ENCODE measurements at regions of chr11 and their contacts with region 1.

Region 1: GRCh38 chr11:65625628-65626342 is 10.2 kb downstream of the PCNX3 start:
- DNase-seq: peak; percentile 71 to 84
- ATAC-seq: peak; percentile 87 to 97 (median 91)
- H3K4me3 ChIP-seq: no peak overlapping the region
- H3K4me3 Mint-ChIP-seq: no peak overlapping the region
- H3K27ac ChIP-seq: no peak overlapping the region
- H3K27ac Mint-ChIP-seq: peak overlapping the region; percentile 63 to 66
- H3K4me1 ChIP-seq: peaks cover 10% of the 10 kb centered on the region
- H3K4me1 Mint-ChIP-seq: peaks cover 7 to 20% of the 10 kb centered on the region in 2 donors
- H3K27me3 ChIP-seq: no peaks in the 10 kb centered on the region
- H3K27me3 Mint-ChIP-seq: no peaks in the 10 kb centered on the region
- CTCF ChIP-seq: peak; percentile 78

Region 2: GRCh38 chr11:65637794-65638317 is 12.1 kb after region 1 on chr11 and contains the start of gene SIPA1:
- intact Hi-C with region 1: no loop called
- DNase-seq: peak; percentile 86 to 88
- ATAC-seq: peak; percentile 41 to 62 (median 49)
- H3K4me3 ChIP-seq: peak within 1 kb of the TSS; percentile 98
- H3K4me3 Mint-ChIP-seq: peak within 1 kb of the TSS; percentile 95
- H3K27ac ChIP-seq: peak within 1 kb of the TSS; percentile 98
- H3K27ac Mint-ChIP-seq: peak within 1 kb of the TSS; percentile 98 to 99
- H3K4me1 ChIP-seq: peaks cover 83% of the 10 kb centered on the region
- H3K4me1 Mint-ChIP-seq: peaks cover 52 to 64% of the 10 kb centered on the region in 2 donors
- H3K27me3 ChIP-seq: no peaks in the 10 kb centered on the region
- H3K27me3 Mint-ChIP-seq: no peaks in the 10 kb centered on the region
- CTCF ChIP-seq: peak; percentile 20
- total RNA-seq, gene SIPA1: 520 to 776 (median 743) TPM

Region 3: DNA sequence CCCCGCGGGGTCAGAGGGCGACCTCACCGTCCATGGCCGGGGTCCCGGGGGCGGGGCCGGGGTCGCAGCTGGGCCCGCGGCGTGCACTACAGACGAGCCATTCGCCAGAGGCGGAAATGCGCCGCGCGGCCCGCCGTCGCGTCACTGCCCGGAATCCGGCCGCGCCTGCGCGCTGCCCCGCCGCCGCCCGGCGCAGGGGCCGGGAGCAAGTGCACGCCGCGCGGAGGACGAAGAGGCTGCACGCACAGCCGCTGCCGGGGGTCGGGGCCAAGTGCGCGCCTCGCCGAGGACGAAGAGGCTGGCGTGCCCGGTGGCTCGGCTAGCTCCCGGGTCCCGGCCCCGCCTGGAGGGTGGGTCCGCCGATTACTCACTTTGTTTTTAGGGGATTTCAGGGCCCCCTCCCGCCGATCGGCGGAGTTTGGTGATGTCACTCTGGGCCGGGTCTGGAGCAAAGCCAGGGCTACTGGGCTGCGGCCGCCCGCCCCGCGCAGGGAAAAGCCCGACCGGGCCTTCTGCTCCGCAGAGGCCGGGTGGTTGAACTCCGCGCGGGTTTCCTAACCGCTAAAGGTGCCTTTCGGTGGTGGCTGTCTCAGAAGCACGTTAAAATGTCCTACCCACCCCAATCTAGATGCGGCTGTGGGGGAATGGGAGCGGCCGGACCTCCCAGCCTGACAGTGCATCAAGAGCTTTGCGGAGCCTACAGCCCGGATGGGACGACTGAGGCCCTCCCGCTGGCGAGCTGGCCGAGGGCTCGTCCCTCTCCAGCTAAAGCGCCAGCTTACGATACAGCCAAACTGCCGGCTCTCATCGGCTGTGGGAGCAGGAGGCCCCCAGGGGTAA is 37.2 kb after region 1 on chr11 and contains the start of gene RELA:
- intact Hi-C with region 1: loop called (anchors 5 kb)
- DNase-seq: peak; percentile 89 to 94
- ATAC-seq: peak; percentile 83 to 92 (median 84)
- H3K4me3 ChIP-seq: peak within 1 kb of the TSS; percentile 95
- H3K4me3 Mint-ChIP-seq: peak within 1 kb of the TSS; percentile 92
- H3K27ac ChIP-seq: peak within 1 kb of the TSS; percentile 98
- H3K27ac Mint-ChIP-seq: peak within 1 kb of the TSS; percentile 92 to 93
- H3K4me1 ChIP-seq: peaks cover 46% of the 10 kb centered on the region
- H3K4me1 Mint-ChIP-seq: peaks cover 18 to 29% of the 10 kb centered on the region in 2 donors
- H3K27me3 ChIP-seq: no peaks in the 10 kb centered on the region
- H3K27me3 Mint-ChIP-seq: no peaks in the 10 kb centered on the region
- CTCF ChIP-seq: no peak
- total RNA-seq, gene RELA: 319 to 380 (median 338) TPM

Region 4: DNA sequence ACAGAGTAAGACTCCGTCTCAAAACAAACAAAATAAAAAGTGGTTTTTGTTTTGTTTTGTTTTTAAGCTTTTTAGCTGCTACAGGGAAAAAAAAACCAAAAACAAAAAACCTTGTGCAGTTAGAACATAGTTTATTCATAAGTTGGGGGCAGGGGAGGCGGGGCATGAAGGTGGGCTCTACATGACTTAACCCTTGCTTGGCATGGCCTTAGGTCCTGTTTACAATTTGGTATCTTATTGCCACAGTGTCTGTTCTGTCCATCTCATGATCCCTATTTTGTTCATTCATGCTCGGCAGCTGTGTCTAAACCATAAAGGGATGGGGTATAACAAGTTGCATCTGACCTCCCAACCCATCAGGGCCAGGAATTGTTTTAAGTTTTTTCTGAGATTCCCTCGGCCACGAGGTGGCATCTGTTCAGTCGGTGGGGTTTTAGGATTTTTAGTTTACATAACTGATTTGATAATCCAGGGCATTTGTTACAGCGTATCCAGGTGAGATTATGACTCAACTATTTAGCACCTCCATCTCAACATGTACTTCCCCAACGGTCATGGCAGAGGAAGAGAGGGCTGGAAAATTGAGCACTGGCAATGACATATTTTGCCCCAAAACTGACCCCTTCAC is 148.1 kb after region 1 on chr11:
- intact Hi-C with region 1: loop called (anchors 1 kb)
- DNase-seq: no peak
- ATAC-seq: no peak
- H3K4me3 ChIP-seq: no peak overlapping the region
- H3K4me3 Mint-ChIP-seq: no peak overlapping the region
- H3K27ac ChIP-seq: no peak overlapping the region
- H3K27ac Mint-ChIP-seq: no peak overlapping the region
- H3K4me1 ChIP-seq: peaks cover 13% of the 10 kb centered on the region
- H3K4me1 Mint-ChIP-seq: peaks cover 6 to 11% of the 10 kb centered on the region in 2 donors
- H3K27me3 ChIP-seq: no peaks in the 10 kb centered on the region
- H3K27me3 Mint-ChIP-seq: no peaks in the 10 kb centered on the region
- CTCF ChIP-seq: no peak

Measured in natural killer cell (primary cell).